Activated CD4-positive, alpha-beta memory T cell treated with anti-CD3 and anti-CD28 coated beads for 36 hours (primary cell): ENCODE measurements at regions of chr2 and their contacts with region 1.

Region 1: DNA sequence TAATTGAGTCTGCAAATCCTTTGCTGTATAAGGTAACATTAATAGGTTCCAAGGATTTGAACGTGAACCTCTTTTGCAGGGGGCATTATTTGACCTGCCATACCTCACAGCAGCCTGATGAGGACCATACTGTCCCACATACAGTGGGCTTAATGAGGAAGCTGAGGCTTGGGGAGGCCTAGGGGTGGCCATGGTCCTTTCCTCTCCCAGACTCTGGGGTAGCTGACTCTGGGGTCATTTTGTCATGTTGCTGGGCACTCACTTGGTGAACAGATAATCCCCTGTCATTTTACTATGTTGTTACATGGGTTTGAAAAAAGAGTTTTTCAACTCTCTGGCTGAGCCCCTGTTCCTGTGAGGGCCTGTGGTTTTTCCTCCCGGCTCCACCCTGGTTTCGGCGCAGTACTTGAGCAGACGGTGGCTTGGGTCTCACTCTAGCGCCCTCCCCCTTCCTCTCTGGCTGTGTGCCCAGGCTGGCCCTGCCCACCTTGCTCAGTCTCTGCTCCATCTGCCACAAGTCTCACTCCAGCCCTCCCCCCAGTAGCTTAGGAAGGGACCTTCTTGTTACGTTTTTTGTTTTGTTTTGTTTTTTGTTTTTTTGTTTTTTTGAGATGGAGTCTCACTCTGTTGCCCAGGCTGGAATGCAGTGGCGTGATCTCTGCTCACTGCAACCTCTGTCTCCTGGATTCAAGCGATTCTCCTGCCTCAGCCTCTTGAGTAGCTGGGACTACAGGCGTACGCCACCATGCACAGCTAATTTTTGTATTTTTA is 21.0 kb downstream of the INPP4A start:
- DNase-seq: peak; percentile 79
- H3K4me3 Mint-ChIP-seq: peak overlapping the region; percentile 68
- H3K27ac Mint-ChIP-seq: peak overlapping the region; percentile 95
- H3K4me1 Mint-ChIP-seq: peaks cover 85% of the 10 kb centered on the region
- H3K27me3 Mint-ChIP-seq: no peaks in the 10 kb centered on the region

Region 2: DNA sequence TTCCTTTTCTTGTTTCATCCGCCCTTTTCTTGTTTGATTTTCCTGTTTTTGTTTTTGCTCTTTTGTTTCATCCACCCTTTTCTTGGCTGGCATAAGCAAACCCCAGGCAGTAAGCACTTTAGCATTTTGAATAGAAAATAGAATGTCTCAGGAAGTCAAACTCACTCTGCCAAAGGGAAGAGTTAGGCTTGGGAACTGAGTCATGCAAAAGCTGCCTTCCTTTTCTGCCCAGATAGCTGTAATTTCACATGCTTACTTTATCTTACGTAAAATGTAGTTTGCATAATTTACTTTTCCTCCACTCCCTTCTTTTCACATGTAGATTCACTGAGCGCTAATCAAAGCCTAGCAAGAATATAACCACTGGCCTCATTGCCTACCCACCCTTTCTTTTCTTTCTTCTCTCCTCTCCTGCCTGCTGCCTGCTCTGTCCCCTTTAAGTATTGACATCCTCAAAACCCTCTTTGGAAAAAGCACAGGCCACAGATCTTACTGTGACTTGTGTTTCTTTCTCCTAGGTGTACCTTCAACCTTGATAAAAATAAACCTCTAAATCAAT is 71.0 kb before region 1 on chr2:
- CTCF ChIA-PET with region 1: no interaction called
- POLR2A ChIA-PET with region 1: no interaction called
- intact Hi-C with region 1: no loop called
- DNase-seq: no peak
- H3K4me3 Mint-ChIP-seq: no peak overlapping the region
- H3K27ac Mint-ChIP-seq: no peak overlapping the region
- H3K4me1 Mint-ChIP-seq: no peaks in the 10 kb centered on the region
- H3K27me3 Mint-ChIP-seq: peaks cover 10% of the 10 kb centered on the region

Region 3: DNA sequence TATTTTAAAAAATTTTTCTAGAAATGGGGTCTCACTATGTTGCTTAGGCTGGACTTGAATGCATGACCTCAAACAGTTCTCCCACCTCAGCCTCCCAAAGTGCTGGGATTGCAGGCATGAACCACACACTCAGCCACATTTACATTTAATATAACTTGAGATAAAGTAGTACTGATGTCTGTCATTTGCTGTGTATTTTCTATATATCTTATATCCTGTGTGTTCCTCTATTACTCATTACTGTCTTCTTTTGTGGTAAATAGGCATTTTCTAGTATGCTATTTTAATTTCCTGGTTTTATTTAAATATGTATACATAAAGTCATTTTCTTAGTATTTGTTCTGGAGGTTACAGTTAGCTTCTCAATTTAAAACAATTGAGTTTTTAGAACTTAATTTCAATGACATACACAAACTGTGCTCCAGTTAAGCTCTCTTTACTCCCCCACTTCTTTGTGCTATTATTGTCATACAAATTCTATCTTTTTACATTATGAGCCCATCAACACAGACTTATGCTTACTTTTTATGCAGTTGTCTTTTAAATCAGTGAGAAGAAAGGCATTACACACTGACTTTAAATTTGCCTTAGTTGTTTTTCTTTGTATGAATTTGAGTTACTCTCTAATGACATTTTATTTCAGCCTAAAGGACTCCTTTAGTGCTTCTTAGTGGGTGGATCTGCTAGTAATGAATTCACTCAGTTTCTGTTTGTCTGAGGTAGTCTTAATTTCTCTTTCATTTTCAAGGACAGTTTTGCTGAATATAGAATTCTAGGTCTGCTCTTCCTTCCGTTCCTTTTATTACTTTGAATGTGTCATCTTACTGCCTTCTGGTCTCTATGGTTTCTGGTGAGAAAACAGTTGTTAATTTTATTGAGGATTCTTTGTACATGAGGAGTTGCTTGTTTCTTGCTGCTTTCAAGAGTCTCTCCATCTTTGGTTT is 27.2 kb before region 1 on chr2:
- CTCF ChIA-PET with region 1: interaction called, 3 read pairs
- POLR2A ChIA-PET with region 1: interaction called, 3 read pairs
- intact Hi-C with region 1: loop called (anchors 1 kb)
- DNase-seq: no peak
- H3K4me3 Mint-ChIP-seq: peak overlapping the region; percentile 8
- H3K27ac Mint-ChIP-seq: peak overlapping the region; percentile 73
- H3K4me1 Mint-ChIP-seq: peaks cover 27% of the 10 kb centered on the region
- H3K27me3 Mint-ChIP-seq: no peaks in the 10 kb centered on the region

Region 4: GRCh38 chr2:98455494-98455976 is 10.1 kb before region 1 on chr2:
- CTCF ChIA-PET with region 1: interaction called, 13 read pairs
- POLR2A ChIA-PET with region 1: interaction called, 13 read pairs
- intact Hi-C with region 1: loop called (anchors 1 kb)
- DNase-seq: peak; percentile 60
- H3K4me3 Mint-ChIP-seq: peak overlapping the region; percentile 55
- H3K27ac Mint-ChIP-seq: peak overlapping the region; percentile 84
- H3K4me1 Mint-ChIP-seq: peaks cover 93% of the 10 kb centered on the region
- H3K27me3 Mint-ChIP-seq: no peaks in the 10 kb centered on the region

Region 5: DNA sequence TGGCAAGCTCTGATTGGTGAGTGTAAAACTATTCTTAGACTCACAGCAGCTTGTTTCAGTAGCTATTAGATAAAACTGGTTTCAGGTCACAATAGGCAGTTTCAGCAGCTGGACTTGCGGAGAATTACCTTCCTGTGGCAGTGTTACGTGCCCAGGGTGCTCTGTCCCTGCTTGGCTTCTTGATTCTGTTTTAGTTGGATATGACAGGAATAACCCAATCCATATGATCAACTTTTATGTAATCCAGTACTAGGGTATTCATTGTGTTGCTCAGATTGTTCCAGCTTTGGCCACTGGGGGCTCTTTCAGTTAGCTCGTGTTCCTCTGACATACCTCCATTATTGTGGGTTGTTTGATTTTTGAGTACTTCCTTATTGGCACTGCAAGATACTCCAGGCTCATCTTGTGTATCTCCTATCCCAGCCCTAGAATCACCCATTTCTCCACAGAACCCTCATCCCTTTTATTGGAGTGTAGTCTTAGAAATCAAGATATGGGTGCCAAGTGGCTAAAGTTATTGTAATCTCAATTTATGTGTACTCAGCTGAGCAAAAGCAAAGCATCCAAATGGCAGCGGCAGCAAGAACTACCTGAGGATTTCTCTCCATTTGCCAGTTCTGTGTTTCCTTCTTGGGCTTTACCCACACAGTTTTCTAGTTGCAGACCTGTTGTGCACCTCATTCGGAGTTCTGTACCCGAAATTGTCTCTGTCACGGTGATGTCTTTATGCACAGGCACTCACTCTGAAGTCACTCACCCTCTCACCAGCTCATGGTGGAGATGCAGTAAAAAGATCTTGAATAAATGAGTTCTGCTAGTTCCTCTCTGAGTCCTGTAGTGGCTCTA is 22.4 kb after region 1 on chr2:
- CTCF ChIA-PET with region 1: interaction called, 20 read pairs
- POLR2A ChIA-PET with region 1: interaction called, 4 read pairs
- intact Hi-C with region 1: loop called (anchors 1 kb)
- DNase-seq: peak; percentile 62
- H3K4me3 Mint-ChIP-seq: no peak overlapping the region
- H3K27ac Mint-ChIP-seq: no peak overlapping the region
- H3K4me1 Mint-ChIP-seq: peaks cover 87% of the 10 kb centered on the region
- H3K27me3 Mint-ChIP-seq: no peaks in the 10 kb centered on the region

Region 6: DNA sequence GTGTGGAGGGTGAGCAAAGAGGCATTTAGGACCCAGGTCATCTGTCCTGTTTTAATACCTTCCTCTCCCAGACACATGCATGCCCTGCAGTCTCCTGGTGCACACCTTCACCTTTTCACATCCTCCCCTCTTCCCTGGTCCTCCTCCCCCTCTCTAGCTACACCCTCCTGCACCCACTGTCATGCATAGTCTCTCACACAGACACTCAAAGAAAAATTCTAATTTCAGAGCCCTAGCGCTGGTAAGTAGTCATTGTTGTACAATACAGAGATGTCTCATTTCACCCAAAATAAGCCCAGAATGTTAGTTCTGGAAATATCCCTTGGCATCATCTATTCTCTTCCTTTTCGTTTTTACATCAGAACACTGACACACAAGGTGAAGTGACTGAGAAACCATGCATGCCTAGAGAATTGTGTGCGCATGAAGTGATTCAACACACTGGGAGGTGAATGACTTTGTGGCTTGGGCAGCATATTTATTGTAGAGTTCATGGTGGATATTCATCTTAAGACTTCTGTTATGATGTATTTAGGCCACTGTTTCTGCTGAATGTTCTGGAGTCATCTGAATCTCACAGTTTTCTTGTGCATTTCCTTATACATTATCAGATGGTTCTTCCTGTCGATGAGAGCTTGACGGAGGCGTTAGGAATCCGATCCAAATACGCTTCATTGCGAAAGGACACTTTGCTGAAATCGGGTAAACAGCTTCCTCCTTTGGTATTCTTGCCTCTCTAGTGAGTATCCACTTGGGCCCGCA is 72.8 kb after region 1 on chr2:
- CTCF ChIA-PET with region 1: interaction called, 3 read pairs
- POLR2A ChIA-PET with region 1: no interaction called
- intact Hi-C with region 1: loop called (anchors 1 kb)
- DNase-seq: peak; percentile 30
- H3K4me3 Mint-ChIP-seq: no peak overlapping the region
- H3K27ac Mint-ChIP-seq: peak overlapping the region; percentile 69
- H3K4me1 Mint-ChIP-seq: peaks cover 26% of the 10 kb centered on the region
- H3K27me3 Mint-ChIP-seq: no peaks in the 10 kb centered on the region